ENCODE measurements at regions of chrX and their contacts with region 1.

Region 1: GRCh38 chrX:152821145-152821765 is 9.3 kb downstream of the CETN2 start:
- DNase-seq: no peak
- CTCF ChIP-seq: peak; percentile 38

Region 2: DNA sequence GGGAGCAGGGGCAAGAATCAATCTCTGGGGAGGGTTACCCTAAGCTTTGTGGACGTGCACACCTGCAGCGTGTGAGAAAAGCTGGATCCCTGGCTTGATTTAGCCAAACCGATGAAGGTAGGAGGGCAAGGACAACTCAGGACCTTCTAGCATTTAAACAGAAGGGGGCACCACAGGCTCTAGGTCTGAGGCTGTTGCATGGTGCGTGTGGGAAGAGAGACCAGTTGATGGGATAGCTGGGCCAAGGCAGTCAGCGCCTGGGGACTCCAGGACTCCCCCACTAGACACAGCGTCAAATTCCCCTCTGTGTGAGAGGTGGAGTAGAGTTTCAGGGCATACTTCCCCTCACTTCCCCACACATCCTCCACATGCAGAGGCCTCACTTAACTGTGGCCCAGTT is 179.3 kb before region 1 on chrX:
- in situ Hi-C with region 1: loop called (anchors 10 kb)
- DNase-seq: peak; percentile 33
- CTCF ChIP-seq: no peak

Measured in GM13976 (cell line).